Ovary (tissue), 10 donors: ENCODE measurements at regions of chr2 and their contacts with region 1.

Region 1: GRCh38 chr2:45993476-45993991 is 303.7 kb upstream of the EPAS1 start:
- DNase-seq: peak in 4 of 5 donors; percentile 49 to 78 (median 65)
- H3K4me3 ChIP-seq: no peak overlapping the region
- H3K27ac ChIP-seq: no peak overlapping the region
- H3K4me1 ChIP-seq: peaks cover 4% of the 10 kb centered on the region
- H3K27me3 ChIP-seq: no peaks in the 10 kb centered on the region
- CTCF ChIP-seq: peak; percentile 41 to 80 (median 61)
- EP300 ChIP-seq: no peak
- POLR2A ChIP-seq: no peak

Region 2: DNA sequence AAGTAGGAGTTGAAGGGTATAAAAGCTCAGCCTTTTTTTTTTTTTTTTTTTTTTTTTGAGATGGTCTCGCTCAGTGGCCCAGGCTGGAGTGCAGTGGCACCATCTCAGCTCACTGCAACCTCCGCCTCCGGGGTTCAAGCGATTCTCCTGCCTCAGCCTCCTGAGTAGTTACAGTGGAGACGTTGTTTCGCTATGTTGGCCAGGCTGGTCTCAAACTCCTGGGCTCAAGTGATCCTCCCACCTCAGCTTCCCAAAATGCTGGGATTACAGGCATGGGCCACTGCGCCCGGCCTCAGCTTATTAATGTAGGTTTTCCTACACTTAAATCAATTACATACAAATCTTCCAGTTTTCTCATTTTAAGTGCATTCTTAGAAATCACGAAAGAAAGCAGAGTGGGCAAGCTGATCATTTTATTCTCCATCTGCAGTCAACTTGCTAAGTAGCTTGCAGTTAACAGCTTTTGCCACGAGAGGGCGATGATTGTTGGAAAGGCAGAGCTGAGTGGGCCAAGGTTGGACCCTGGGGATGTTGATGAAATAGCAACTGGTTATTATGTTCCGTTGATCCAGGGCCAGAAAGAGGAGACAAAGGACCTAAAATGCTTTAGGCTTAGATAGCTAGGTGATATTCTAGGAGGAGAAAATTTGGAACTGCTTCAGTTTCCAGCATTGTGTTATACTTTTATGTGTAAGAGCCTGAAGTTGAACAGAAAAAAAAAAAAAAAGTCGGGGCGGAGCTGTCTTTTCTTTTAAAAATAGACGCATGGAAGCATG is 69.3 kb after region 1 on chr2:
- intact Hi-C with region 1: loop called in 1 of 4 experiments (anchors 10 kb)
- DNase-seq: peak; percentile 72 to 90 (median 77)
- H3K4me3 ChIP-seq: no peak overlapping the region
- H3K27ac ChIP-seq: no peak overlapping the region
- H3K4me1 ChIP-seq: peaks cover 1% of the 10 kb centered on the region
- H3K27me3 ChIP-seq: no peaks in the 10 kb centered on the region
- CTCF ChIP-seq: peak; percentile 75 to 88 (median 77)
- EP300 ChIP-seq: no peak
- POLR2A ChIP-seq: no peak

Region 3: GRCh38 chr2:46461011-46461674 is 467.6 kb after region 1 on chr2:
- intact Hi-C with region 1: loop called in 2 of 4 experiments (anchors 2 kb)
- DNase-seq: peak; percentile 69 to 88 (median 86)
- H3K4me3 ChIP-seq: no peak overlapping the region
- H3K27ac ChIP-seq: peak overlapping the region in 1 of 2 donors; percentile 27
- H3K4me1 ChIP-seq: peaks cover 5% of the 10 kb centered on the region
- H3K27me3 ChIP-seq: no peaks in the 10 kb centered on the region
- CTCF ChIP-seq: peak; percentile 95 to 98 (median 95)
- EP300 ChIP-seq: no peak
- POLR2A ChIP-seq: peak; percentile 18

Region 4: DNA sequence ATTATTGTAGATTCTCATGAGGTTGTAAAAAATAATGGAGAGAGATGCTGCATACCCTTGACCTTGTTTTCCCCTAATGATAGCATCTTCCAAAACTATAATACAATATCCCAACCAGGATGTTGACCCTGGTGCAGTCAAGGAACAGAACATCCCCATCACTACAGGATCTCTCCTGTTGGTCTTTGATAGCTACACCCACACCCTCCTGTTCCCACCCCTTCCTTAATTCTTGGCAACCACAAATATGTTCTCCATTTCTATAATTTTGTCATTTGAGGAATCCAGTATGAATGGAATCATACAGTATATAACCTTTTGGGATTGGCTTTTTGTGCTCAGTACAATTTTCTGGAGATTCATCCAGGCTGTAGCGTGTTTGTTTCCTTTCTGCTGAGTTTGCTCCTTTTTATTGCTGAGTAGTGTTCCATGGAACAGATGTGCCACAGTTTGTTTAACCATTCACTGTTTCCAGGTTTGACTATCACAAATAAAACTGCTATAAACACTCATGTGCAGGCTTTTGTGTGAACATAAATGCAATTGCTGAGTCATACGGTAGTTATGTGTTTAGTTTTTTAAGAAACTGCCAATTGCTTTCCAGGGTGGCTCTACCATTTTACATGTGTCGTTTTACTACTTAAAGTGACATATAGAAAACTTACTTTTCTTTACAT is 899.9 kb after region 1 on chr2:
- intact Hi-C with region 1: loop called in 1 of 4 experiments (anchors 10 kb)
- DNase-seq: no peak
- H3K4me3 ChIP-seq: no peak overlapping the region
- H3K27ac ChIP-seq: no peak overlapping the region
- H3K4me1 ChIP-seq: no peaks in the 10 kb centered on the region
- H3K27me3 ChIP-seq: no peaks in the 10 kb centered on the region
- CTCF ChIP-seq: no peak
- EP300 ChIP-seq: no peak
- POLR2A ChIP-seq: no peak